CD4-positive, alpha-beta memory T cell (primary cell): ENCODE measurements at regions of chr5 and their contacts with region 1.

Region 1: DNA sequence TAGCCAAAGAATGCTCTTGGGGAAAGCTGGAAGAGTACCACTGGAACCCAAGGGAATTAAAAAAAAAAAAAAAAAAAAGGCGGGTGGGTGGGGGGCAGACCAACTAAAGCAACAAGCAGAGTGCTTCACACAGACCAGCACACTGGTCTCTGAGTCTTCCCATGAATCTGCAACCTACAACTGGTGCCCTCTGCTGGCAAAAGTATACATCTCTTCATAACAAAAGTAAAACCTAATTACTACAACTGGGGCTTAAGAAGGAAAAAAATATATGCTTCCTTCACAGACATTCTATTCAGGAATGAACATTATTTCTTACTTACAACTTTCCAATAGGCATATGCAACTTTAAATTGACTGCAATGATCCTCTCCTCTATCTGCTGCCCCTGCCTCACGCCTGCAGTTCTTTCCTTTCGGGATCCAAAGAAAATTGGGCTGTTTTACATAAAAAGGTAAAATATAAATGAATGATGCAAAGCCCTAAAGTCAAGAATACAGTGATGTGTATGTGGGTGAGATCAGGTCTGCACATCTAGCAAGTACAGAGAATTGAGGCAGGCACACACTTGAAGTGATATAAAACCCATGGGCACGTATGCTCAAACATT is 7.2 kb upstream of the KLHL3 start:
- DNase-seq: peak; percentile 60 to 71 (median 70)
- H3K4me3 ChIP-seq: no peak overlapping the region
- H3K4me3 Mint-ChIP-seq: no peak overlapping the region
- H3K27ac ChIP-seq: no peak overlapping the region
- H3K27ac Mint-ChIP-seq: no peak overlapping the region
- H3K4me1 ChIP-seq: peaks cover 5% of the 10 kb centered on the region
- H3K4me1 Mint-ChIP-seq: peaks cover 0 to 20% (median 3%) of the 10 kb centered on the region in 4 donors
- H3K27me3 ChIP-seq: no peaks in the 10 kb centered on the region
- H3K27me3 Mint-ChIP-seq: no peaks in the 10 kb centered on the region

Region 2: DNA sequence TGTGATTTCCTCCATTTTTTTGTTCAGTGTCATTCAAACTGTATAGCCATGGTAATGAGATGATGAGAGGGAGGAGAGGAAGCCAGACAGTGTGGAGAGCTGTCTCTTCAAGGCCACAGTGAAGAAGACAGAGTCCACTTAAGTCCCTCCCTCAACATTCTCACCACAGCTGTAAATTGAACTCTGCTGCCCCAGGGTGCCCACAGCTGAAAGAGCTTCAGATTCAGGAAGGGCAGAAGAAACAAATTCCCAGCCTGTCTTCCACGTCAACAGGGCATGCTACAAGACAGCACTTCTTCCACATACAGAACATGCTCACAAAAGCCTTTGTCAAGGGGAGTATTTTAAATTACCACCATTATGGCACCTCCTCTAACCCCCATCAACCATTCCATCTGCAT is 107.6 kb before region 1 on chr5:
- CTCF ChIA-PET with region 1: interaction called, 127 read pairs
- POLR2A ChIA-PET with region 1: no interaction called
- intact Hi-C with region 1: no loop called
- DNase-seq: no peak
- H3K4me3 ChIP-seq: no peak overlapping the region
- H3K4me3 Mint-ChIP-seq: no peak overlapping the region
- H3K27ac ChIP-seq: no peak overlapping the region
- H3K27ac Mint-ChIP-seq: peak overlapping the region in 1 of 7 donors; percentile 77
- H3K4me1 ChIP-seq: no peaks in the 10 kb centered on the region
- H3K4me1 Mint-ChIP-seq: no peaks in the 10 kb centered on the region
- H3K27me3 ChIP-seq: no peaks in the 10 kb centered on the region
- H3K27me3 Mint-ChIP-seq: no peaks in the 10 kb centered on the region

Region 3: DNA sequence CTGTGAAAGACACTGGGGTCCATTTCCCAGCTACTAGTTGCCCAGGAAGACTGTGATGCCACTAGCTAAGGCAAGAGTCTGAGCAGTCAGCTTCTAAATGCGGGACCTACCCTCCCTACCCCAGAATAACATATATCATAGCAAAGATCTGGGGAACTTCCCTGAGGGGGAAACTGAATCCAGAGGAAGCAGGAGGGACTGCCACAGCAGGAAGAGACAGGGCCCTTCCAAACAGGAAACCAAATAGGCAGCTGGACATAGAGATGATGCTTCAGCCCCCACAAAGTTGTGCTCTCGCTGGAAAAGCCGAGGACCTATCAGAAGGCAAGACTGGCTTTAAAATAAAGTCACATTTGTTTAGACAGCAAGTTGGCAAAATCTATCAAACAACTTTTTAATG is 58.4 kb before region 1 on chr5:
- CTCF ChIA-PET with region 1: interaction called, 186 read pairs
- POLR2A ChIA-PET with region 1: no interaction called
- intact Hi-C with region 1: no loop called
- DNase-seq: no peak
- H3K4me3 ChIP-seq: no peak overlapping the region
- H3K4me3 Mint-ChIP-seq: no peak overlapping the region
- H3K27ac ChIP-seq: no peak overlapping the region
- H3K27ac Mint-ChIP-seq: peak overlapping the region in 1 of 7 donors; percentile 30
- H3K4me1 ChIP-seq: no peaks in the 10 kb centered on the region
- H3K4me1 Mint-ChIP-seq: peaks cover 0 to 6% (median 2%) of the 10 kb centered on the region in 4 donors
- H3K27me3 ChIP-seq: no peaks in the 10 kb centered on the region
- H3K27me3 Mint-ChIP-seq: no peaks in the 10 kb centered on the region

Region 4: GRCh38 chr5:137714946-137715345 is 28.2 kb before region 1 on chr5:
- CTCF ChIA-PET with region 1: interaction called, 20 read pairs
- POLR2A ChIA-PET with region 1: no interaction called
- intact Hi-C with region 1: no loop called
- DNase-seq: no peak
- H3K4me3 ChIP-seq: no peak overlapping the region
- H3K4me3 Mint-ChIP-seq: no peak overlapping the region
- H3K27ac ChIP-seq: no peak overlapping the region
- H3K27ac Mint-ChIP-seq: no peak overlapping the region
- H3K4me1 ChIP-seq: no peaks in the 10 kb centered on the region
- H3K4me1 Mint-ChIP-seq: peaks cover 0 to 7% (median 2%) of the 10 kb centered on the region in 4 donors
- H3K27me3 ChIP-seq: no peaks in the 10 kb centered on the region
- H3K27me3 Mint-ChIP-seq: no peaks in the 10 kb centered on the region

Region 5: GRCh38 chr5:137754126-137754960 is 11.2 kb after region 1 on chr5 and contains the start of gene HNRNPA0:
- CTCF ChIA-PET with region 1: interaction called, 37 read pairs
- POLR2A ChIA-PET with region 1: interaction called, 85 read pairs
- intact Hi-C with region 1: loop called (anchors 1 kb)
- DNase-seq: peak; percentile 98 to 99 (median 99)
- H3K4me3 ChIP-seq: peak within 1 kb of the TSS; percentile 49 to 96
- H3K4me3 Mint-ChIP-seq: peak within 1 kb of the TSS; percentile 98 to 100 (median 99)
- H3K27ac ChIP-seq: peak within 1 kb of the TSS; percentile 100
- H3K27ac Mint-ChIP-seq: peak within 1 kb of the TSS; percentile 100
- H3K4me1 ChIP-seq: peaks cover 33% of the 10 kb centered on the region
- H3K4me1 Mint-ChIP-seq: peaks cover 26 to 54% (median 34%) of the 10 kb centered on the region in 4 donors
- H3K27me3 ChIP-seq: no peaks in the 10 kb centered on the region
- H3K27me3 Mint-ChIP-seq: peaks cover 0 to 9% of the 10 kb centered on the region in 2 donors
- total RNA-seq, gene HNRNPA0: 30.5 to 30.7 TPM